Activated CD8-positive, alpha-beta memory T cell treated with anti-CD3 and anti-CD28 coated beads, Interleukin-2, amount 10 ng/mL, durations not matched to agents 7 days and 5 days (primary cell): ENCODE measurements at regions of chr1 and their contacts with region 1.

Region 1: DNA sequence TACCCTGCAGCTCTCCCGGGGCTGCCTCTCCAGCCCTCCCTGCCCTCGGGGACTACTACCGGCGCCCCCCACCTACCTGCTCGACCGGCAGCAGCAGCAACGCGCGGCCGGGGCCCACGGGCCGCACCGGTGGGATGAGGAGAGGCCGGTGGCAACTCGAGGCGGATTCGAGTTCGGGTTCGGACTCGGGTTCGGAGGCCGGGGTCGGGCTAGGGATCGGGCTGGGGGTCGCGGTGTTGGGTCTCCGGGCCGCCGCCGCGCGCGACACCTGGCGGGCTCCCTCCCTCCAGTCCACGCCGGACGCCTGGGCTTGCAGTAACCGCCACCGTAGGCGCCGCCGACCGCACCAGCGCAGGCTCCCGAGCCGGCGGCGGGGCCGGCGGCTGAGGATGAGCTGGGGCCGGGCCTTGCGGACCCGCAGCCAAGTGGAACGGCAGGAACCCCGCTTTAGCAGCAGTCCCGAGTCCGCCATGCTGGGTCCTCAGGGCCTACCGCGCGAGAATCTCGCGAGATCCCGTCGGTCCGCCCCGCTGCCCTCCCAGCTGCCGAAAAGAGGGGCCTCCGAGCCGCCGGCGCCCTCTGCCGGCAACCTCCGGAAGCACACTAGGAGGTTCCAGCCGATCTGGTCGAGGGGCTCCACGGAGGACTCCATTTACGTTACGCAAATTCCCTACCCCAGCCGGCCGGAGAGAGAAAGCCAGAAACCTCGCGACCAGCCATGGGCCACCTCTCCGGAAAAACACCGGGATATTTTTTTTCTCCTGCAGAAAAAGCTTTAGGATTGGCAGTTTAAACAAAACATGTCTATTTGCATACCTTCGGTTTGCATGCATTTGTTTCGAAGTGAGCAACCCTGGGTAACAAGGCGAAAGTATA is at the start of gene NOL9:
- DNase-seq: peak; percentile 97
- ATAC-seq: peak; percentile 98
- H3K4me3 Mint-ChIP-seq: peak within 1 kb of the TSS; percentile 76
- H3K27ac Mint-ChIP-seq: peak within 1 kb of the TSS; percentile 64
- H3K4me1 Mint-ChIP-seq: peaks cover 19% of the 10 kb centered on the region
- H3K27me3 Mint-ChIP-seq: no peaks in the 10 kb centered on the region
- total RNA-seq, gene NOL9: 32.5 to 39.1 TPM

Region 2: DNA sequence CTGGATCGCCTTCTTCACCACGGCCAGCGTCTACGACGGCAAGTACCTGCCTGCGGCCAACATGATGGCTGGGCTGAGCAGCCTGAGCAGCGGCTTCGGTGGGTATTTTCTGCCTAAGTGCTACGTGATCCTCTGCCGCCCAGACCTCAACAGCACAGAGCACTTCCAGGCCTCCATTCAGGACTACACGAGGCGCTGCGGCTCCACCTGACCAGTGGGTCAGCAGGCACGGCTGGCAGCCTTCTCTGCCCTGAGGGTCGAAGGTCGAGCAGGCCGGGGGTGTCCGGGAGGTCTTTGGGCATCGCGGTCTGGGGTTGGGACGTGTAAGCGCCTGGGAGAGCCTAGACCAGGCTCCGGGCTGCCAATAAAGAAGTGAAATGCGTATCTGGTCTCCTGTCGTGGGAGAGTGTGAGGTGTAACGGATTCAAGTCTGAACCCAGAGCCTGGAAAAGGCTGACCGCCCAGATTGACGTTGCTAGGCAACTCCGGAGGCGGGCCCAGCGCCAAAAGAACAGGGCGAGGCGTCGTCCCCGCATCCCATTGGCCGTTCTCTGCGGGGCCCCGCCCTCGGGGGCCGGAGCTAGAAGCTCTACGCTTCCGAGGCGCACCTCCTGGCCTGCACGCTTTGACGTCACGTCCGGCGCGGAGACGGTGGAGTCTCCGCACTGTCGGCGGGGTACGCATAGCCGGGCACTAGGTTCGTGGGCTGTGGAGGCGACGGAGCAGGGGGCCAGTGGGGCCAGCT is 25.3 kb after region 1 on chr1 and contains the start of gene ZBTB48:
- CTCF ChIA-PET with region 1: interaction called, 24 read pairs
- DNase-seq: peak; percentile 98
- ATAC-seq: peak; percentile 99
- H3K4me3 Mint-ChIP-seq: peak within 1 kb of the TSS; percentile 94
- H3K27ac Mint-ChIP-seq: peak within 1 kb of the TSS; percentile 94
- H3K4me1 Mint-ChIP-seq: peaks cover 31% of the 10 kb centered on the region
- H3K27me3 Mint-ChIP-seq: no peaks in the 10 kb centered on the region
- total RNA-seq, gene ZBTB48: 30.7 to 37.4 TPM

Region 3: DNA sequence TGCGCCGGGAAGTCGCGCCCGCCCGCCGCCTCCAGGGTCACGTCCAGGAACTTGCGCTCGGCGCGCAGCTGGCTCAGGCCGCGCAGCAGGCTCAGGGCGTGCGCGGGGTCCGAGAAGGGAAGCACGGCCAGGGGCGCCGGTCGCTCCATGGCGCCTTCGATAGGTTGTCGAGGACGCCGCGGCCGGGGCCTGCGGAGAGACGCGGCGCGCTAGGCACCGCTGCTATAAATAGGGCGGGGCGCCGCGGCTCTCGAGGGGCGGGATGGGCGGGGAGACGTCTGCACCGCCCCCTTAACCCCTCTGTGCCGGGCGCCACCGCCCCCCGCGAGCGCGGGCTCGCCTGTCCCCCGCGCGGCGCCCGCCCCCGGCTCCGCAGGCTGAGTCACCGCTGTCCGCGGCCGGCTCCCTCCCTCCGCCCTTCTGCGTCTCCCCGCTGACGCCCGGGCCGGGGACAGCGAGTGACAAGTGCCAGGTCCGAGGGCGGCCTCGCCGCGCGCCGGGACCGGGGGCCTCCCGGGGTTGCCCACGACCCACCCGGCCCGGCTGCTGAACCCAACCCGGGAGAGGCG is 48.5 kb after region 1 on chr1 and contains the start of gene KLHL21:
- CTCF ChIA-PET with region 1: interaction called, 10 read pairs
- DNase-seq: peak; percentile 91
- ATAC-seq: peak; percentile 70
- H3K4me3 Mint-ChIP-seq: peak within 1 kb of the TSS; percentile 95
- H3K27ac Mint-ChIP-seq: peak within 1 kb of the TSS; percentile 99
- H3K4me1 Mint-ChIP-seq: peaks cover 36% of the 10 kb centered on the region
- H3K27me3 Mint-ChIP-seq: no peaks in the 10 kb centered on the region
- total RNA-seq, gene KLHL21: 23.9 to 28.2 TPM

Region 4: DNA sequence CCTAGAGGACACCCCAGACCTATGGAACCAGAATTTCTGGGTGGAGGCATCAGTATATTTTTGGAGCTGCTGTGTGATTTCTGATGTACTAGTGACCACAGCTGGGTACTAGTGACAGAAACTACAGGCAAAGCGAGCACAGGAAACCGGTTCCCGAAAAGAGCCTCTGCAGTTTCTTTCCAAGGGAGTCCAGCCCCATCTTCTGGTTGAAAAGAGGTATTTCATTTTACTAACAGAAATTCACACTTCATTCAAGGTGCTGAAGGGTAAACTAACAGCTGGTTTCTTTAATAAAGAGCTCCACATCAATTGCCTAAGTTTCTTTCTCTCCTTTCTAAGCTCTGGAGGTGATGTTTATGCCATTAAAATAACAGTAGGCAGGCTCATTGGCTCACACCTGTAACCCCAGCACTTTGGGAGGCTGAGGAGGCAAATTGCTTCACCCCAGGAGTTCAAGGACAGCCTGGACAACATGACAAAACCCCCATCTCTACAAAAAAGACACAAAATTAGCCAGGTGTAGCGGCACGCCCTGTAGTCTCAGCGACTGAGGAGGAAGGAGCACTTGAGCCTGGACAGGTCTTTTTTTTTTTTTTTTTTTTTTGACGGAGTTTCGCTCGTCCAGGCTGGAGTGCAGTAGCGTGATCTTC is 92.4 kb after region 1 on chr1:
- CTCF ChIA-PET with region 1: interaction called, 16 read pairs
- DNase-seq: no peak
- ATAC-seq: peak; percentile 64
- H3K4me3 Mint-ChIP-seq: no peak overlapping the region
- H3K27ac Mint-ChIP-seq: no peak overlapping the region
- H3K4me1 Mint-ChIP-seq: no peaks in the 10 kb centered on the region
- H3K27me3 Mint-ChIP-seq: no peaks in the 10 kb centered on the region

Region 5: DNA sequence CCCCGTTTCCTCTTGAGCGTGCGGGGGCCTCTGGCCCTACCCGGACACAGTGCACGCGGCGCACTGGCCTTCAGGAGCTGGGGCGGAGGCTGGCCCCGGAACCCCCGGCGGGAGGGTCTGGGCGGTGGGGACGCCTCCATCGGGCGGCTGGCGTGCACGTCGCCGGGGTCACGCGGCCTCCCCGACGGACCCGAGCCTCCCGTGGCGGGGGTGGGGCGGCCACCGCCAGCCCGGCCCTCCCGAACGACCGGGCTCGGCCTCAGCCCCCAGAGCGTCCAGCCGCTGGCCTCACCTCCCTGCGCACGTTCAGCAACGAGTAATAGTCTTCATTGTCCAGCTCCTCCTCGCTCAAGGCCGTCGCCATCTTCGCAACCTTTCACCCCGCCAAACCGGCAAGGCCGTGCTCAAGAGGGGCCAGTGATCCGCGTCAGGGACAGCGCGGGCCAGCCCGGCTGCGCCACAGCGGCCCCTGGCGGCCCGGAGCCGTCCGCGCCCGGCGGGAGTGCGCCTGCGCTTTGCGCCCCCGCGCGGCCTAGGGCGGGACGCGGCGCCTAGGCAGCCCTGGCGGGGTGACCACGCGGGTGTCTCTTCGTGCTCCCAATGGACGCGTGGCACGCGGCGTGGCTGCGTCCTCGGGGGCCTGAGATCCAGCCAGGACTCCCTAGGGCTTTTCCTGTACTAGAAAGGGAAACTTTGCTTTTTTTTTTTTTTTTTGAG is 147.3 kb after region 1 on chr1 and contains the start of gene DNAJC11:
- CTCF ChIA-PET with region 1: interaction called, 12 read pairs
- DNase-seq: peak; percentile 93
- ATAC-seq: peak; percentile 98
- H3K4me3 Mint-ChIP-seq: peak within 1 kb of the TSS; percentile 81
- H3K27ac Mint-ChIP-seq: peak within 1 kb of the TSS; percentile 87
- H3K4me1 Mint-ChIP-seq: peaks cover 35% of the 10 kb centered on the region
- H3K27me3 Mint-ChIP-seq: no peaks in the 10 kb centered on the region
- total RNA-seq, gene DNAJC11: 45.4 to 51.0 TPM